ENCODE measurements at regions of chr6 and their contacts with region 1.

Region 1: DNA sequence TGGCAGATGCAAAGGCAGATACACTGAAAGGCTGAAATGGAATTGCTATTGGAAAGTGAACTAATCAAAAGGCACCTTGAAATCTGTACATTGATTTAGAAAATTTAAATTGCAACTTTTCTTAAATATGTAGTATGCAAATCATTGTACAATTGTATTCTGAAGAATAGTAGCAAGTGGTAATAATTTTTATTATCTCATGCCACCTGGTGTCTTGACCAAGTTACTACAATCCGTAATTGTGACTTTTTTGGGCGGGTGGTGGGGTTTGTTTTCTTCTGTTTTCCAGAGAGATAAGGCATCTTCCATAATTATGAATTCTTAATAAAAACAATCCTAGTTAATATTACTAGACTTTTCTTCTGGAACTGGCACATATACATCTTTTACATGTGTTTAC is 12.5 kb upstream of the BCKDHB start:
- DNase-seq: peak in 1 of 3 donors; percentile 11
- ATAC-seq: no peak
- H3K4me3 ChIP-seq: no peak overlapping the region
- H3K4me1 ChIP-seq: no peaks in the 10 kb centered on the region
- CTCF ChIP-seq: peak; percentile 20

Region 2: GRCh38 chr6:79810185-79810705 is 283.8 kb before region 1 on chr6:
- intact Hi-C with region 1: no loop called
- DNase-seq: no peak
- ATAC-seq: no peak
- H3K4me3 ChIP-seq: no peak overlapping the region
- H3K4me1 ChIP-seq: no peaks in the 10 kb centered on the region
- CTCF ChIP-seq: no peak

Region 3: DNA sequence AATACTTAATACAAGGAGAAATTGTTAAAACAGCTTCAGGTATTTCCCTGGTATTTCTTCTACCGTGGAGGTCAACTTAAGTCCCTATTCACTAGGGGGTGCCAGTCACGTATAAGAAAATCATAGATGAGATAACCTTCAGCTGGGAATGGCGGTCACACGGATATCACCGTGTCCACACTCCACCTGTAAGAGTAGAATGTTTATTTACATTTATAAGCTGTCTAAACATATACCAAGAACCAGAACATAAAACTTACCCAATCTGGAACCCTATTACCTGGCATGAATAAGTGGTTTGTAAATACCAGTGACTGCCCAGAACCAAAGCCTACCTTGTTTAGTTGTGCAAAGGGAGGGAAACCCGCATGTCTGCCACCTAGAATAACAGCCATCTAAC is 144.8 kb before region 1 on chr6:
- intact Hi-C with region 1: loop called (anchors 5 to 10 kb)
- DNase-seq: peak in 2 of 3 donors; percentile 27 to 91
- ATAC-seq: peak; percentile 67
- H3K4me3 ChIP-seq: no peak overlapping the region
- H3K4me1 ChIP-seq: peaks cover 8% of the 10 kb centered on the region
- CTCF ChIP-seq: peak; percentile 16

Region 4: DNA sequence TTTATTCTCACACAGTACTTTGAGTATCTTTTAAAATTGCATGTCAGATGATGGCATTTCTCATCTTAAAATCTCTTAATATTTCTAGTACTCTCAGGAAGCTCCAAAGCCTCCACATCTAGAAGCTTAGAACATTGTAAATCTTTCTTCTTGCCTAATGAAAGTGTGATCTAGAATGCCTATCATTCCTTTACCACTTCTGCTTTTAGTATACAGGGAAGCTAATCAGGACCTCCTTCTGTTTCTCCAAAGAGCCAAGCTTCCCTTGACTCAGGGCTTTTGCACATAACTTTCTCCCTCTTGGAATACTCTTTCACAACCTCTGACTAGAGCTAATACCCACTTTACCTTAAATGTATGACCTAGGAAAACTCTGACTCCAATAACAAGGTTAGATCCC is 139.2 kb before region 1 on chr6:
- intact Hi-C with region 1: loop called in 1 of 2 experiments (anchors 5 kb)
- DNase-seq: no peak
- ATAC-seq: no peak
- H3K4me3 ChIP-seq: no peak overlapping the region
- H3K4me1 ChIP-seq: no peaks in the 10 kb centered on the region
- CTCF ChIP-seq: no peak

Region 5: GRCh38 chr6:80133020-80133419 is 39.0 kb after region 1 on chr6:
- intact Hi-C with region 1: no loop called
- DNase-seq: peak in 2 of 3 donors; percentile 59 to 92
- ATAC-seq: peak; percentile 92
- H3K4me3 ChIP-seq: no peak overlapping the region
- H3K4me1 ChIP-seq: no peaks in the 10 kb centered on the region
- CTCF ChIP-seq: peak; percentile 36

Region 6: GRCh38 chr6:80197474-80197873 is 103.5 kb after region 1 on chr6:
- intact Hi-C with region 1: no loop called
- DNase-seq: no peak
- ATAC-seq: no peak
- H3K4me3 ChIP-seq: no peak overlapping the region
- H3K4me1 ChIP-seq: no peaks in the 10 kb centered on the region
- CTCF ChIP-seq: no peak